ENCODE measurements at regions of chr1 and their contacts with region 1.

Region 1: DNA sequence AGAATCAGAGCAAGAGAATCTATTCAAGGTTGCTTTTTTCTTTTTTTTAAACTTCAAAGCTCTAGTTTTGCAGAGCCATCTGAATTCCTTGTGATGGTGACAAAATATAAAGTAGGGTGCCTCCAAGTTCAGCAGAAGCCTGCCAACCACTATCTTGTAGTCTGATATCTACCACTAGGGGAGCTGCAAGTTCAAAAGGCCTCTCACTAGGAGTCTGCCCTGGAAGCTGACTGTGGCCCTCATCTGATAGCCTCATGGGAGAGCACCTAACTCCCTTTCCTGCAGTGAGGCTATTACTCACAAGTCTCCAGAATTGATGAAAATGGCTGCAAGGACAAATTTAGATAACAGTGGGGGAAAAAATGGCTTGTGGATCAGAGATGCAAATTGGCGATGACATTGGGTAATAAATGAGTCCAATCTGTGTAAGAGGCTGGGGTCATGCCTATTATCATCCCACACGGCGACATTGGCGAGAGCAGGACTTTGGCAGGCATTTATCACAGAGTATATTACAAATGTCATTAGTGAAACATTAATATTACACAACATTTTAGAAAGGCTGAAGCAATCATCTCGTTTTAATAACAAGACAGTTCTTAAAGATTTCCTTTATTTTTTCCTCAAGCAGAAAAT is 10.7 kb upstream of the ZP4 start:
- DNase-seq: no peak
- H3K4me3 ChIP-seq: no peak overlapping the region
- H3K27ac ChIP-seq: no peak overlapping the region
- H3K4me1 ChIP-seq: no peaks in the 10 kb centered on the region
- H3K27me3 ChIP-seq: no peaks in the 10 kb centered on the region
- CTCF ChIP-seq: peak; percentile 43 to 71 (median 64)
- EP300 ChIP-seq: no peak
- POLR2A ChIP-seq: no peak
- RAD21 ChIP-seq: peak; percentile 47 to 59

Region 2: GRCh38 chr1:237619553-237619952 is 281.9 kb before region 1 on chr1:
- CTCF ChIA-PET with region 1: no interaction called
- POLR2A ChIA-PET with region 1: no interaction called
- DNase-seq: no peak
- H3K4me3 ChIP-seq: no peak overlapping the region
- H3K27ac ChIP-seq: no peak overlapping the region
- H3K4me1 ChIP-seq: no peaks in the 10 kb centered on the region
- H3K27me3 ChIP-seq: no peaks in the 10 kb centered on the region
- CTCF ChIP-seq: no peak
- EP300 ChIP-seq: no peak
- POLR2A ChIP-seq: no peak
- RAD21 ChIP-seq: no peak

Region 3: GRCh38 chr1:237873487-237874211 is 27.8 kb before region 1 on chr1:
- CTCF ChIA-PET with region 1: interaction called, 11 read pairs
- POLR2A ChIA-PET with region 1: no interaction called
- DNase-seq: peak; percentile 46 to 47
- H3K4me3 ChIP-seq: no peak overlapping the region
- H3K27ac ChIP-seq: no peak overlapping the region
- H3K4me1 ChIP-seq: peaks cover 0 to 6% (median 2%) of the 10 kb centered on the region in 4 experiments; a peak in 3 of 7 replicates
- H3K27me3 ChIP-seq: no peaks in the 10 kb centered on the region
- CTCF ChIP-seq: no peak
- EP300 ChIP-seq: no peak
- POLR2A ChIP-seq: no peak
- RAD21 ChIP-seq: no peak

Region 4: DNA sequence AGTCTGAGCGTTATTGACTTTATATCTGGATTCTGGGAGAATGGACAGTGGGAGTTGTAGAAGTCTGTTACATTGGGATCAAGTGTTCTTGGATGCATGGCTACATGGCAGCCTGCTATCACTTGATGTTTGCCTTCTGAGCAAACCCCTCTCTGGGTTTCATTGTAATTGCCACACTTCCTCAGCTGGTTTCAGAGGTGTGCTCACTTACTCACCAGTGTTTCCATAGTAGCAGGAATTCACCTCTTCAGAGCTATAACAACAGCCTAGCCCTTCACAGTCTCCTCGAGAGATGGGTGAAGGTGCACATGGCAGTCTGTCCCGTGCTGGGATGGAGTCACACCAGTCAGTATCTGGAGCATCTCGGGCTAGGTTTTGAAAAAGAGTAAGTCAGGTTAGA is 13.3 kb before region 1 on chr1:
- CTCF ChIA-PET with region 1: interaction called, 28 read pairs
- POLR2A ChIA-PET with region 1: no interaction called
- DNase-seq: no peak
- H3K4me3 ChIP-seq: no peak overlapping the region
- H3K27ac ChIP-seq: no peak overlapping the region
- H3K4me1 ChIP-seq: no peaks in the 10 kb centered on the region
- H3K27me3 ChIP-seq: no peaks in the 10 kb centered on the region
- CTCF ChIP-seq: no peak
- EP300 ChIP-seq: no peak
- POLR2A ChIP-seq: no peak
- RAD21 ChIP-seq: no peak

Region 5: GRCh38 chr1:237983496-237983895 is 82.1 kb after region 1 on chr1:
- CTCF ChIA-PET with region 1: no interaction called
- POLR2A ChIA-PET with region 1: no interaction called
- DNase-seq: no peak
- H3K4me3 ChIP-seq: no peak overlapping the region
- H3K27ac ChIP-seq: no peak overlapping the region
- H3K4me1 ChIP-seq: no peaks in the 10 kb centered on the region
- H3K27me3 ChIP-seq: no peaks in the 10 kb centered on the region
- CTCF ChIP-seq: no peak
- EP300 ChIP-seq: no peak
- POLR2A ChIP-seq: no peak
- RAD21 ChIP-seq: no peak